GM12878 (cell line): ENCODE measurements at regions of chr11 and their contacts with region 1.

Region 1: GRCh38 chr11:31641477-31642062 is 132.0 kb downstream of the ELP4 start:
- DNase-seq: no peak
- ATAC-seq: no peak
- H3K4me3 ChIP-seq: no peak overlapping the region
- H3K27ac ChIP-seq: no peak overlapping the region
- H3K4me1 ChIP-seq: no peaks in the 10 kb centered on the region
- H3K27me3 ChIP-seq: no peaks in the 10 kb centered on the region
- CTCF ChIP-seq: peak; percentile 54 to 61 (median 56)
- EP300 ChIP-seq: no peak
- POLR2A ChIP-seq: no peak
- RAD21 ChIP-seq: peak; percentile 32

Region 2: DNA sequence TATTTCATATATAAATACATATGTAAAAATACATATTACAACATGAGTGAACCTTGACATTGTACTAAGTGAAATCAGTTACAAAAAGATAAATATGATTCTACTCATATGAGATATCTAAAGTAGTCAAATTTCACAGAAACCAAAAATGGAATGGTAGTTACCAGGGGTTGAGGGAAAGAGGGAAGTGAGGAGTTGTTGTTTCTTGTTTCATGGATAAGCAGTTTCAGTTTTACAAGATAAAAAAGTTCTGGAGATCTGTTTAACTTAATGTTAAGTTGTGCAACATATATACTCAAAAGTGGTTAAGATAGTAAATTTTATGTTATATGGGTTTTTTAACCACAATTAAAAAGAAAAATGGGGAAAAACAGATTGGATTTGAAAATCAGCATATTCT is 24.3 kb before region 1 on chr11:
- CTCF ChIA-PET with region 1: interaction called, 15 read pairs
- POLR2A ChIA-PET with region 1: no interaction called
- RAD21 ChIA-PET with region 1: interaction called, 3 read pairs
- SMC1A ChIA-PET with region 1: no interaction called
- in situ Hi-C with region 1: no loop called
- intact Hi-C with region 1: no loop called
- DNase-seq: no peak
- ATAC-seq: no peak
- H3K4me3 ChIP-seq: no peak overlapping the region
- H3K27ac ChIP-seq: no peak overlapping the region
- H3K4me1 ChIP-seq: no peaks in the 10 kb centered on the region
- H3K27me3 ChIP-seq: no peaks in the 10 kb centered on the region
- CTCF ChIP-seq: no peak
- EP300 ChIP-seq: no peak
- POLR2A ChIP-seq: no peak
- RAD21 ChIP-seq: no peak

Region 3: GRCh38 chr11:31655483-31655882 is 13.9 kb after region 1 on chr11:
- CTCF ChIA-PET with region 1: interaction called, 44 read pairs
- POLR2A ChIA-PET with region 1: no interaction called
- RAD21 ChIA-PET with region 1: interaction called, 6 read pairs
- SMC1A ChIA-PET with region 1: interaction called, 31 read pairs
- in situ Hi-C with region 1: no loop called
- intact Hi-C with region 1: no loop called
- DNase-seq: no peak
- ATAC-seq: no peak
- H3K4me3 ChIP-seq: no peak overlapping the region
- H3K27ac ChIP-seq: no peak overlapping the region
- H3K4me1 ChIP-seq: peaks cover 14% of the 10 kb centered on the region
- H3K27me3 ChIP-seq: no peaks in the 10 kb centered on the region
- CTCF ChIP-seq: no peak
- EP300 ChIP-seq: no peak
- POLR2A ChIP-seq: no peak
- RAD21 ChIP-seq: no peak

Region 4: GRCh38 chr11:31779374-31779791 is 137.8 kb after region 1 on chr11:
- CTCF ChIA-PET with region 1: interaction called, 3 read pairs
- POLR2A ChIA-PET with region 1: interaction called, 11 read pairs
- RAD21 ChIA-PET with region 1: no interaction called
- SMC1A ChIA-PET with region 1: no interaction called
- in situ Hi-C with region 1: no loop called
- intact Hi-C with region 1: no loop called
- DNase-seq: no peak
- ATAC-seq: no peak
- H3K4me3 ChIP-seq: no peak overlapping the region
- H3K27ac ChIP-seq: no peak overlapping the region
- H3K4me1 ChIP-seq: no peaks in the 10 kb centered on the region
- H3K27me3 ChIP-seq: no peaks in the 10 kb centered on the region
- CTCF ChIP-seq: no peak
- EP300 ChIP-seq: no peak
- POLR2A ChIP-seq: no peak
- RAD21 ChIP-seq: no peak

Region 5: GRCh38 chr11:31870609-31871309 is 229.2 kb after region 1 on chr11:
- CTCF ChIA-PET with region 1: interaction called, 27 read pairs
- POLR2A ChIA-PET with region 1: no interaction called
- RAD21 ChIA-PET with region 1: interaction called, 11 read pairs
- SMC1A ChIA-PET with region 1: interaction called, 22 read pairs
- in situ Hi-C with region 1: no loop called
- intact Hi-C with region 1: no loop called
- DNase-seq: no peak
- ATAC-seq: peak; percentile 84
- H3K4me3 ChIP-seq: no peak overlapping the region
- H3K27ac ChIP-seq: no peak overlapping the region
- H3K4me1 ChIP-seq: no peaks in the 10 kb centered on the region
- H3K27me3 ChIP-seq: no peaks in the 10 kb centered on the region; a peak in 2 of 4 replicates
- CTCF ChIP-seq: peak; percentile 59 to 66 (median 64); a peak in 5 of 6 replicates
- EP300 ChIP-seq: no peak
- POLR2A ChIP-seq: no peak
- RAD21 ChIP-seq: peak; percentile 90